HEK293 (cell line): ENCODE measurements at regions of chr14 and their contacts with region 1.

Region 1: GRCh38 chr14:64005822-64006221 is 153.0 kb downstream of the SYNE2 start:
- H3K4me3 ChIP-seq: no peak overlapping the region
- H3K27ac ChIP-seq: no peak overlapping the region
- H3K4me1 ChIP-seq: no peaks in the 10 kb centered on the region; the same call in 1 of the 2 replicates
- CTCF ChIP-seq: no peak

Region 2: DNA sequence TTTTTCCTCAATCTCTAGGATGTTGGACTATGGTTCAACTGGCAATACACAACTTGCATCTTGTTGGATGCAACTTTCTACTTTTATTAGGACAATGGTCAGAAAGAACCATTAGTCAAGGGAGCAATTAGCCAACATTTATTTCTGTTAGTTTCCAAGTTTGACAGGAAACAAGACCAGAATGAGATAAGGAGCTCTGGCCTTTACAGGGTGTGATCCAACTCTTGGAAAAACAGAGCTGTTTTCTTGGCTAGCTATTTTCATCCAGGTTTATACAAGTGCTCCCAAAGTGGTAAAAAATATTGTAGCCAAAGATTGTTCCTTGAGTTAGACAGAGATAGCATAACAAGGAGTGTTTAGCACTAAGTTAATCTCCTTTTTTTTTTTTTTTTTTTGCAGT is 156.9 kb before region 1 on chr14:
- CTCF ChIA-PET with region 1: no interaction called
- POLR2A ChIA-PET with region 1: interaction called, 10 read pairs
- H3K4me3 ChIP-seq: no peak overlapping the region
- H3K27ac ChIP-seq: no peak overlapping the region
- H3K4me1 ChIP-seq: peaks cover 2% of the 10 kb centered on the region; the same call in 1 of the 2 replicates
- CTCF ChIP-seq: no peak

Region 3: GRCh38 chr14:63986789-63987533 is 18.9 kb before region 1 on chr14:
- CTCF ChIA-PET with region 1: no interaction called
- POLR2A ChIA-PET with region 1: no interaction called
- H3K4me3 ChIP-seq: no peak overlapping the region
- H3K27ac ChIP-seq: no peak overlapping the region
- H3K4me1 ChIP-seq: no peaks in the 10 kb centered on the region
- CTCF ChIP-seq: no peak